Psoas muscle (tissue), 8 donors: ENCODE measurements at regions of chr9 and their contacts with region 1.

Region 1: GRCh38 chr9:77166193-77166592 is 11.1 kb upstream of the VPS13A start:
- DNase-seq: no peak
- ATAC-seq: no peak
- H3K4me3 ChIP-seq: no peak overlapping the region
- H3K27ac ChIP-seq: no peak overlapping the region
- H3K4me1 ChIP-seq: peaks cover 18% of the 10 kb centered on the region
- H3K27me3 ChIP-seq: no peaks in the 10 kb centered on the region
- CTCF ChIP-seq: no peak

Region 2: GRCh38 chr9:77215874-77216273 is 49.7 kb after region 1 on chr9:
- intact Hi-C with region 1: loop called (anchors 5 kb)
- DNase-seq: no peak
- ATAC-seq: peak in 3 of 4 donors; percentile 34 to 77 (median 77)
- H3K4me3 ChIP-seq: no peak overlapping the region
- H3K27ac ChIP-seq: no peak overlapping the region
- H3K4me1 ChIP-seq: peaks cover 7% of the 10 kb centered on the region
- H3K27me3 ChIP-seq: no peaks in the 10 kb centered on the region
- CTCF ChIP-seq: peak; percentile 27

Region 3: DNA sequence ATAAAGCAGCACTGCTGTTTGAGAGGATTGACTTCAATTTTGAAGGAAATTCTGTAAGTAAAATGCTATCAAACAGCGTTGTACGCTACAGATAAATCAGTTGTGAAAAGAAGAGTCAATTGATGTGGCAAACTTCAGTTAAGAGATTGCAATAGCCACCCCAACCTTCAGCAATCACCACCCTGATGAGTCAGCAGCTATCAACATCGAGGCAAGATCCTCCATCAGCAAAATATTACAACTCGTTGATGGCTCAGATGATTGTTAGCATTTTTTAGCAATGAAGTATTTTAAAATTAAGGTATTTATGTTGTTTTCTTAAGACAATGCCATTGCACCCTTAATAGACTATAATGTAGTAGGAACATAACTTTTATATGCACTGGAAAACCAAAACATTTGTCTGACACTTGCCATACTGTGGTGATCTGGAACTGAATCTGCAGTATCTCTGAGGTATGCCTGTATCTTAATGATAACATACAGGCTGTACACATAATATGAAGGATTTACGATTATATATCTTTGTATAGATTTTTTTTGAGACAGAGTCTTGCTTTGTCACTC is 58.6 kb after region 1 on chr9:
- intact Hi-C with region 1: loop called in 1 of 2 experiments (anchors 5 kb)
- DNase-seq: no peak
- ATAC-seq: no peak
- H3K4me3 ChIP-seq: no peak overlapping the region
- H3K27ac ChIP-seq: no peak overlapping the region
- H3K4me1 ChIP-seq: no peaks in the 10 kb centered on the region
- H3K27me3 ChIP-seq: no peaks in the 10 kb centered on the region
- CTCF ChIP-seq: no peak